Natural killer cell (primary cell): ENCODE measurements at regions of chr9 and their contacts with region 1.

Region 1: DNA sequence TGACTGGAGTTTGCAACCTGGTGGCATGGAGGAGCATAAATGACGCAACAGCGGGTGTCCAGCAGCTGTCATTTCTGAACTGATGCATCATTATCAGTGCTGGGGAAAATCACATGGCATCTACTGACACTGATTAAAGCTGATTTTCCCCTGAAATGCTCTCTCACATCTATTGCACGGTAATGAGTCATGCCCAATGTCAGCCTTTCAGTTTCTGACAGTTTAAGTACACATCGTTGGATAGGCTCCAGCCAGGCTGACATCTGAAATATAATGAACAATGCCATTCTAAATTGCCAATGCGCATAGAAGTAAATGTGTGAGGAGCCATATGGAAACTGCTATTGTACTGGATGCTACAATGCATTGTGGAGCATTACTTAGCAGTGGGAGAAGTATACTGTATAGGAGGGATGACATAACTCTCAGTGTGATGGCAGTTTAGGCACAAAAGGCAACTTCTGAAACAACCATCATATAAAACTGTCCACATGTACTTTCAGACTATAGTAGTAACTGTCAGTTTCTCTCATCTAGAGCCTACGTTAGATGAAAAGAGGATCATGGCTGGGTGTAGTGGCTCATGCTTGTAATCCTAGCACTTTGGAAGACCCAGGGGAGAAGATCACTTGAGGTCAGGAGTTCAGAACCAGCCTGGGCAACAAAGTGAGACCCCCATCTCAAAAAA is 389.3 kb upstream of the DMAC1 start:
- DNase-seq: no peak
- ATAC-seq: no peak
- H3K4me3 ChIP-seq: no peak overlapping the region
- H3K4me3 Mint-ChIP-seq: no peak overlapping the region
- H3K27ac ChIP-seq: no peak overlapping the region
- H3K27ac Mint-ChIP-seq: no peak overlapping the region
- H3K4me1 ChIP-seq: no peaks in the 10 kb centered on the region
- H3K4me1 Mint-ChIP-seq: no peaks in the 10 kb centered on the region
- H3K27me3 ChIP-seq: no peaks in the 10 kb centered on the region
- H3K27me3 Mint-ChIP-seq: peaks cover 5 to 24% of the 10 kb centered on the region in 2 donors
- CTCF ChIP-seq: no peak

Region 2: GRCh38 chr9:7844242-7844641 is 344.6 kb before region 1 on chr9:
- intact Hi-C with region 1: loop called (anchors 10 kb)
- DNase-seq: peak in 1 of 2 donors; percentile 61
- ATAC-seq: peak; percentile 39 to 88 (median 66)
- H3K4me3 ChIP-seq: no peak overlapping the region
- H3K4me3 Mint-ChIP-seq: no peak overlapping the region
- H3K27ac ChIP-seq: no peak overlapping the region
- H3K27ac Mint-ChIP-seq: no peak overlapping the region
- H3K4me1 ChIP-seq: no peaks in the 10 kb centered on the region
- H3K4me1 Mint-ChIP-seq: peaks cover 9 to 13% of the 10 kb centered on the region in 2 donors
- H3K27me3 ChIP-seq: no peaks in the 10 kb centered on the region
- H3K27me3 Mint-ChIP-seq: peaks cover 0 to 2% of the 10 kb centered on the region in 2 donors
- CTCF ChIP-seq: peak; percentile 61

Region 3: DNA sequence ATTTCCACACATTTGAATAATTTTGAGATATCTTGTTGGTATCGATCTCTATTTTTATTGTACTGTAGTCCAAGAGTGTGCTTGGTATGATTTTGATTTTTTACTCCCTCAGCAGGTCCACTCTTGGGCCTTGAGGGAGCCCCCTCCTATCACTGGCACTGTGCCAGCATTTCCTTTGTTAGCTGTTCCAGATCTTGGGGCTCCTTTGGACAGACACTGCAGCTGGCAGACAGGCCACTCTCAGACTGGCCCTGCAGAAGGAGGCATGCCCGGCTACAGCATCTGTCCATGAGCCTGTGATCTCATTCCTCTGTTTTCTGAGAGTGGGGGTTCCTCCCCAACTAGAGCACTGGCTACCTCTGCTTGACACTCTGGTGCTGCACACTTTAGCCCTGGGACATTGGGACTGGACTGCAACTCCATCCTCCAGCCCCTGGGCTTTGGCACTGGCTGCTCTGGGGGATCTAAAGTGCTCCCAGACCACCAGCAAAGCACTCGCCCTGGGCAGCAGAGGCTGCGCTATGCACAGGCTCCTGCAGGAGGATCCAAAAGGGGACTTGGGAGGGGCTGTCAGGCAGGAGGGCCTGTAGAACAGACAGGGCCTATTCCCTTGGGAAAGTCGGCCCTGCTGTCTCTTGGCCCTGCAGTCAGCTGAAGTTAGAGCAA is 118.0 kb before region 1 on chr9:
- intact Hi-C with region 1: no loop called
- DNase-seq: no peak
- ATAC-seq: no peak
- H3K4me3 ChIP-seq: no peak overlapping the region
- H3K4me3 Mint-ChIP-seq: no peak overlapping the region
- H3K27ac ChIP-seq: no peak overlapping the region
- H3K27ac Mint-ChIP-seq: no peak overlapping the region
- H3K4me1 ChIP-seq: no peaks in the 10 kb centered on the region
- H3K4me1 Mint-ChIP-seq: peaks cover 0 to 4% of the 10 kb centered on the region in 2 donors
- H3K27me3 ChIP-seq: no peaks in the 10 kb centered on the region
- H3K27me3 Mint-ChIP-seq: peaks cover 0 to 10% of the 10 kb centered on the region in 2 donors
- CTCF ChIP-seq: no peak